ENCODE measurements at regions of chrX and their contacts with region 1.

Region 1: GRCh38 chrX:28586981-28587551 is at the start of gene IL1RAPL1:
- DNase-seq: peak; percentile 67
- ATAC-seq: peak; percentile 66
- H3K4me3 ChIP-seq: peak within 1 kb of the TSS; percentile 66
- H3K27ac ChIP-seq: no peak within 1 kb of the TSS
- H3K4me1 ChIP-seq: peaks cover 26% of the 10 kb centered on the region
- H3K27me3 ChIP-seq: no peaks in the 10 kb centered on the region
- CTCF ChIP-seq: peak; percentile 53
- total RNA-seq, gene IL1RAPL1: 0.12 and 0.44 TPM in 2 replicates

Region 2: GRCh38 chrX:27918799-27919198 is 668.3 kb before region 1 on chrX:
- CTCF ChIA-PET with region 1: no interaction called
- POLR2A ChIA-PET with region 1: no interaction called
- intact Hi-C with region 1: loop called (anchors 10 kb)
- DNase-seq: peak; percentile 46
- ATAC-seq: no peak
- H3K4me3 ChIP-seq: no peak overlapping the region
- H3K27ac ChIP-seq: no peak overlapping the region
- H3K4me1 ChIP-seq: no peaks in the 10 kb centered on the region
- H3K27me3 ChIP-seq: no peaks in the 10 kb centered on the region
- CTCF ChIP-seq: peak; percentile 51

Region 3: DNA sequence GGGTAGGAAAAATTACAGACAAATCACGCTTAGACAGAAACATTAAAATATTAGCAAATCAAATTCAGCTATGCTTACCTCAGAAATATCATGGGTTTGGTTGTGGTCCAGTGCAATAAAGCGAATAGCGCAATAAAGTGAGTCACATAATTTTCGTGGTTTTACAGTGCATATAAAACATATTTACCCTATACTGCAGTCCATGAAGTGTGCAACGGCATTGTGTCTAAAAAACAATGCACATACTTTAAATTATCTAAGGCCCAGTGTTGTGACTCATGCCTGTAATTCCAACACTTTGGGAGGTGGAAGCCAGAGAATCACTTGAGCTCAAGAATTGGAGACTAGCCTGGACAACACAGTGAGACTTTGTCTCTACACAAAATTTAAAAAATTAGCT is 195.5 kb before region 1 on chrX:
- CTCF ChIA-PET with region 1: no interaction called
- POLR2A ChIA-PET with region 1: no interaction called
- intact Hi-C with region 1: loop called (anchors 5 kb)
- DNase-seq: peak; percentile 88
- ATAC-seq: peak; percentile 98
- H3K4me3 ChIP-seq: no peak overlapping the region
- H3K27ac ChIP-seq: peak overlapping the region; percentile 39; the same call in 1 of the 2 replicates
- H3K4me1 ChIP-seq: no peaks in the 10 kb centered on the region
- H3K27me3 ChIP-seq: no peaks in the 10 kb centered on the region
- CTCF ChIP-seq: no peak

Region 4: GRCh38 chrX:28639451-28639850 is 52.4 kb after region 1 on chrX:
- CTCF ChIA-PET with region 1: no interaction called
- POLR2A ChIA-PET with region 1: no interaction called
- intact Hi-C with region 1: no loop called
- DNase-seq: peak; percentile 70
- ATAC-seq: no peak
- H3K4me3 ChIP-seq: no peak overlapping the region
- H3K27ac ChIP-seq: no peak overlapping the region
- H3K4me1 ChIP-seq: peaks cover 15% of the 10 kb centered on the region
- H3K27me3 ChIP-seq: no peaks in the 10 kb centered on the region
- CTCF ChIP-seq: no peak

Region 5: DNA sequence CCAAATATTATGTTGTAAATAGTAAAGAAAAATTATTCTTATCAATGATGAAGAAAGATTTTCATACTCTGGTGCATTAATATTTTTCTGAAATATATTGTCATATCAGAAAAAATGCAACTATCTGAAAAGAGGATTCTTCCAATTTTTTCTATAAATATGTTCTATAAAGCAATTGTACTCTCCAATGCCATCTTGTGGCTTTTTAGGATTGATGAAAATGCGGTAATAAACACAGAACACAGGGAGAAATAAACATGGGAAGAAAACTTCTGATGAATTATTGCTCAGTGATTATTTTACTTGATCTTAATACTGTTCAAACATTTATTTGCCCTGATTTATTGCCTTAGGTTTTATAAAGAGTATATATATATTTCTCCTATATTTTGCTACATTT is 215.6 kb after region 1 on chrX:
- CTCF ChIA-PET with region 1: no interaction called
- POLR2A ChIA-PET with region 1: interaction called, 4 read pairs
- intact Hi-C with region 1: loop called (anchors 2 kb)
- DNase-seq: peak; percentile 23
- ATAC-seq: no peak
- H3K4me3 ChIP-seq: no peak overlapping the region
- H3K27ac ChIP-seq: no peak overlapping the region
- H3K4me1 ChIP-seq: no peaks in the 10 kb centered on the region
- H3K27me3 ChIP-seq: no peaks in the 10 kb centered on the region
- CTCF ChIP-seq: peak; percentile 57

Region 6: GRCh38 chrX:29231800-29232199 is 644.7 kb after region 1 on chrX:
- CTCF ChIA-PET with region 1: no interaction called
- POLR2A ChIA-PET with region 1: no interaction called
- intact Hi-C with region 1: loop called (anchors 1 kb)
- DNase-seq: peak; percentile 25
- ATAC-seq: 0 out of 2 replicates have a peak, but pooled peaks have one; percentile 33
- H3K4me3 ChIP-seq: no peak overlapping the region
- H3K27ac ChIP-seq: no peak overlapping the region
- H3K4me1 ChIP-seq: peaks cover 18% of the 10 kb centered on the region
- H3K27me3 ChIP-seq: no peaks in the 10 kb centered on the region
- CTCF ChIP-seq: peak; percentile 53